Mammary epithelial cell (primary cell): ENCODE measurements at regions of chr6 and their contacts with region 1.

Region 1: GRCh38 chr6:131937703-131938631 is 13.2 kb downstream of the CCN2 start:
- DNase-seq: no peak
- H3K4me3 ChIP-seq: no peak overlapping the region
- H3K27ac ChIP-seq: no peak overlapping the region
- H3K4me1 ChIP-seq: peaks cover 11% of the 10 kb centered on the region
- H3K27me3 ChIP-seq: no peaks in the 10 kb centered on the region
- CTCF ChIP-seq: no peak

Region 2: GRCh38 chr6:132041706-132042105 is 103.7 kb after region 1 on chr6:
- CTCF ChIA-PET with region 1: no interaction called
- dilution Hi-C with region 1: loop called (anchors 5 kb)
- in situ Hi-C with region 1: no loop called
- intact Hi-C with region 1: no loop called
- DNase-seq: no peak
- H3K4me3 ChIP-seq: no peak overlapping the region
- H3K27ac ChIP-seq: no peak overlapping the region
- H3K4me1 ChIP-seq: no peaks in the 10 kb centered on the region
- H3K27me3 ChIP-seq: no peaks in the 10 kb centered on the region
- CTCF ChIP-seq: no peak